Calu3 (cell line): ENCODE measurements at regions of chr7 and their contacts with region 1.

Region 1: GRCh38 chr7:14495633-14496032 is 406.9 kb downstream of the DGKB start:
- DNase-seq: no peak
- H3K4me3 Mint-ChIP-seq: no peak overlapping the region
- H3K27ac Mint-ChIP-seq: peak overlapping the region; percentile 56
- H3K4me1 Mint-ChIP-seq: peaks cover 12% of the 10 kb centered on the region
- H3K27me3 Mint-ChIP-seq: no peaks in the 10 kb centered on the region
- CTCF ChIP-seq: no peak

Region 2: DNA sequence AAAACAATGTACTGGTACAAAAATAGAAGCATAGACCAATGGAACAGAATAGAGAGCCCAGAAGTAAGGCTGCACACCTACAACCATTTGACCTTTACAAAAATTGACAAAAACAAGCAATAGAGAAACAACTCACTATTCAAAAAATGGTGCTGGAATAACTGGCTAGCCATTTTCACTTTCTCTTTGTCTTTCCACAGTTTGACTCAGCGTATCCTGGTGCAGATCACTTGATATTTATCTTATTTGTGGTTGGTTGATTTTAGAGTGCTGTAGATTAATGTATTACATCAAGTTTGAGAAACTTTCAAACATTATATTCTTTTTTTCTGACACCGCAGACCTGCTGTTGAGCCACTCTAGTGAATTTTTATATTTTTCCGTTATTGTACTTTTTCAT is 25.6 kb after region 1 on chr7:
- CTCF ChIA-PET with region 1: no interaction called
- intact Hi-C with region 1: loop called (anchors 1 kb)
- DNase-seq: no peak
- H3K4me3 Mint-ChIP-seq: no peak overlapping the region
- H3K27ac Mint-ChIP-seq: no peak overlapping the region
- H3K4me1 Mint-ChIP-seq: no peaks in the 10 kb centered on the region
- H3K27me3 Mint-ChIP-seq: no peaks in the 10 kb centered on the region
- CTCF ChIP-seq: no peak

Region 3: GRCh38 chr7:14637968-14638367 is 142.3 kb after region 1 on chr7:
- CTCF ChIA-PET with region 1: no interaction called
- intact Hi-C with region 1: loop called (anchors 1 kb)
- DNase-seq: no peak
- H3K4me3 Mint-ChIP-seq: no peak overlapping the region
- H3K27ac Mint-ChIP-seq: no peak overlapping the region
- H3K4me1 Mint-ChIP-seq: peaks cover 43% of the 10 kb centered on the region
- H3K27me3 Mint-ChIP-seq: no peaks in the 10 kb centered on the region
- CTCF ChIP-seq: peak; percentile 17